PC-9 (cell line): ENCODE measurements at regions of chrX and their contacts with region 1.

Region 1: GRCh38 chrX:154534862-154535670 is 11.6 kb downstream of the G6PD start:
- DNase-seq: peak; percentile 51 to 89
- H3K4me3 ChIP-seq: no peak overlapping the region
- H3K27ac ChIP-seq: no peak overlapping the region
- H3K4me1 ChIP-seq: peaks cover 26% of the 10 kb centered on the region
- H3K27me3 ChIP-seq: no peaks in the 10 kb centered on the region
- CTCF ChIP-seq: peak; percentile 85

Region 2: GRCh38 chrX:152632445-152633097 is 1902.5 kb before region 1 on chrX:
- CTCF ChIA-PET with region 1: no interaction called
- POLR2A ChIA-PET with region 1: no interaction called
- intact Hi-C with region 1: no loop called
- DNase-seq: peak; percentile 49 to 62
- H3K4me3 ChIP-seq: no peak overlapping the region
- H3K27ac ChIP-seq: no peak overlapping the region
- H3K4me1 ChIP-seq: no peaks in the 10 kb centered on the region
- H3K27me3 ChIP-seq: no peaks in the 10 kb centered on the region
- CTCF ChIP-seq: peak; percentile 98

Region 3: DNA sequence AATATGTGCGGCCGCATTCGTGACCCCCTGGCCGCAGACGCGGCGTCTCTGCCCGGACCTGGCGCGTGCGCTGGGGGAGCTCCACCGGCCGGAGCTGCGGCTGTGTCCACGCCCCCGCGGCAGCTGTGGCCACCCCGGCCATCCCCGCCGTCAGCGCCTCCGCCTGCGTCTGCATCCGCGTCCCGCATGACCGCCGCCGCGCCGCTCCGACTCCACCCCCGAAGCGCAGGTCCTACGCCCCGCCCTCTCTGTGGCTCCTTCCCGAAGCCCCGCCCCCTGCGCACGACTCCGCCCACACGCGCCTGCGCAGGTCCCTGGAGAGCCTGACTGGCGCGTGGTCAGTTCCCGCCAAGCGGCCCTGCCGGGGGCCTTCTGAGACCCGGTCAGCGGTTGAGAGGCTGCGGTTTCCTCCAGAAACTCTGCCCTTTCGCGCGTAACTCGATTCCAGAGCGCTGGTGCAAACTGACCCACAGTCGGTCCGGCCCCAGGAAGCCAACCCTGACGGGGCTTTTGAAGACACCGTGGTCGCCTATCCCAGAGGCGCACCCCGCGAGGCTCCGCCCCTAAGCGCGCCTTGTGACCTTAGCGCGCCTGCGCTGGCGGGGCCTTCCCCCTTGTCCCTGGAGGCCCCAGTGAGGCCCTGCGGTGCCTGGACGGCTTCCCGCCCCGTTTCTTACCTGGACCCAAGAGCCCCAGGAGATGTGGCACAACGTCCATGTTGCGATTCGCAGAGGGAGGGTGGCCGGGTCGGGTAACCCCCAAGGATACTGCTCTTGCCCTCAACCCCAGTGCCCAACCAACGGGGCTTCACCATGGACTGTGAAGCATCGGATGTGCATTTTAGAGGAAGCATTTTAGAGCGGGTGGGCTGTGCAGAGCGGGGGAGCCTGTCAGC is 56.1 kb before region 1 on chrX and contains the start of gene LAGE3:
- CTCF ChIA-PET with region 1: no interaction called
- POLR2A ChIA-PET with region 1: interaction called, 10 read pairs
- intact Hi-C with region 1: no loop called
- DNase-seq: peak; percentile 73 to 99
- H3K4me3 ChIP-seq: peak within 1 kb of the TSS; percentile 60; the same call in 1 of the 2 replicates
- H3K27ac ChIP-seq: no peak within 1 kb of the TSS
- H3K4me1 ChIP-seq: peaks cover under 1% of the 10 kb centered on the region
- H3K27me3 ChIP-seq: no peaks in the 10 kb centered on the region
- CTCF ChIP-seq: no peak
- total RNA-seq, gene LAGE3: 63.9 and 82.5 TPM in 2 replicates

Region 4: DNA sequence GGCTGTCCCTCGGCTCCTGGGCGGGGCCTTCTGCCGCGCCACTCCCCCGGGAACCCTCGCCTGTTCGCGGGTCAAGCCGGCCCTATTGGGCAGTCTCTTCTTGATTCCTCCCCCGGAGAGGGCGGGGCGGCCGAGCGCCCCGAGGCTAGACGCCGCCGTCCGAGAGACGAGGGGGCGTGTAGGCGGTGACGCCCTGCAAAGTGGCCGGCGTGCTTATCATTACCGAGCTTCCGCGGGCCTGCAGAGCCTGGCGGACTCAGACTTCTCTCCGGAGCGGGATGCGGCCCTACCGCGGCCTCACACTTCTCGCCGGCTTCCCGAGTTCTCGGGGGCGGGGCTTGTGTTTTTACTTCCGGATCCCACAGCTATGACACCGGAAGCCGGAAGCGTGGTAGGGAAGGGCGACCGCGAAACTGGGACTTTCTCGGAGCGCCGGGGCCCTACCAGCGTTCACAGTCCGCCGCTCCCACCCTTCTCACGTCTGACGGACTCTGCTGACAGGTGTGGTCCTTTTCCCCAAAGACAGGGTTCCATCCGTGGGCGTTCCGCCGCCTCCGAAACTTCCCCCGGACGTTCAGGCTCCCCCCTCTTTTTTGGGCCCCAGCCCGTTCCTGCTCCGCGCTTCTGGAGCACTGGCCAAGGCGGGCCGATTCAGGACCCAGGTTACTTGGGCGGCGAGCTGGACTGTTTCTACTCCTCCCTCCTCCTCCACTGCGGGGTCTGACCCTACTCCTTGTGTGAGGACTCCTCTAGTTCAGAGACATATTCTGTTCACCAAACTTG is 12.4 kb after region 1 on chrX and contains the start of gene IKBKG:
- CTCF ChIA-PET with region 1: interaction called, 4 read pairs
- POLR2A ChIA-PET with region 1: interaction called, 13 read pairs
- intact Hi-C with region 1: no loop called
- DNase-seq: peak; percentile 82 to 98
- H3K4me3 ChIP-seq: peak within 1 kb of the TSS; percentile 99
- H3K27ac ChIP-seq: peak within 1 kb of the TSS; percentile 100
- H3K4me1 ChIP-seq: peaks cover 27% of the 10 kb centered on the region
- H3K27me3 ChIP-seq: no peaks in the 10 kb centered on the region
- CTCF ChIP-seq: no peak
- total RNA-seq, gene IKBKG: 68.3 and 69.4 TPM in 2 replicates

Region 5: GRCh38 chrX:154804957-154805695 is 270.1 kb after region 1 on chrX and contains the start of gene MPP1:
- CTCF ChIA-PET with region 1: interaction called, 24 read pairs
- POLR2A ChIA-PET with region 1: no interaction called
- intact Hi-C with region 1: no loop called
- DNase-seq: peak; percentile 44 to 87
- H3K4me3 ChIP-seq: peak within 1 kb of the TSS; percentile 54
- H3K27ac ChIP-seq: no peak within 1 kb of the TSS
- H3K4me1 ChIP-seq: peaks cover 5% of the 10 kb centered on the region; the same call in 1 of the 2 replicates
- H3K27me3 ChIP-seq: peaks cover 3% of the 10 kb centered on the region; the same call in 1 of the 2 replicates
- CTCF ChIP-seq: no peak
- total RNA-seq, gene MPP1: 4.2 and 4.8 TPM in 2 replicates